ENCODE measurements at regions of chr19 and their contacts with region 1.

Region 1: DNA sequence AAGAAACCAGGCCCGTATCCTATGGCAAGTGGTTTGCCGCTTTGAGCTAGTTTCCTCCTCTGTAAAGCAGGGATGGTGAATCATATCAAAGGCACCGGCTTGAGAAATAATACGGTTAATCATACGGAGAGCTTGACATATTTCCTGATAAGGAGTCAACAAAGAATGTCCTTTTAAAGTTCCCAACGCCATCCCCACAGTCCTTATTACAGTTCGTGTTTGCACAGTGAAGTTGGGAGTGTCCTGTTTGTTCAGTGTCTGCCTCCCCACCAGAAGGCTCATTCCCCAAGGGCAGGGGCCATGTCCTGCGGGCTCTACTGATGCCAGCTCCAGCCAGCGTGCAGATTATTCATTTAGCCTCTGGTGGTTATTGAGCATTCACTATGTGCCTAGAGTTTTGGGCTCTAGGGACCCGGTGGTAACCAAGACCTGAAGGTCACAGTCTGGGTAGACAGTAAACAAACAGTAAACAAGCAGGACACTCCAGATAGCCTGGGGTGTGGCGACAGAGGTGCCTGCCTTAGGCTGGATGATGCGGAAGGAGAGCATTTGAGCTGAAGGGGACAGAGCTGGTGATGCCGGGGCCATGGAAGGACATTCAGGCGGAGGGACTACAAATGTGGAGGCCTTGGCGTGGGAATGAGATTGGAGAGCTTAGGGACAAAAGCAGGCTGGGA is 6.4 kb downstream of the GRAMD1A start:
- DNase-seq: peak; percentile 87 to 99
- H3K4me3 ChIP-seq: peak overlapping the region; percentile 24; the same call in 1 of the 2 replicates
- H3K27ac ChIP-seq: peak overlapping the region; percentile 69
- H3K4me1 ChIP-seq: peaks cover 44% of the 10 kb centered on the region
- H3K27me3 ChIP-seq: no peaks in the 10 kb centered on the region
- CTCF ChIP-seq: no peak

Region 2: GRCh38 chr19:34386645-34387445 is 619.6 kb before region 1 on chr19:
- CTCF ChIA-PET with region 1: no interaction called
- POLR2A ChIA-PET with region 1: interaction called, 27 read pairs
- intact Hi-C with region 1: no loop called
- DNase-seq: no peak
- H3K4me3 ChIP-seq: no peak overlapping the region
- H3K27ac ChIP-seq: no peak overlapping the region
- H3K4me1 ChIP-seq: no peaks in the 10 kb centered on the region
- H3K27me3 ChIP-seq: no peaks in the 10 kb centered on the region
- CTCF ChIP-seq: no peak

Region 3: GRCh38 chr19:34468409-34468808 is 538.1 kb before region 1 on chr19:
- CTCF ChIA-PET with region 1: no interaction called
- POLR2A ChIA-PET with region 1: no interaction called
- intact Hi-C with region 1: no loop called
- DNase-seq: no peak
- H3K4me3 ChIP-seq: no peak overlapping the region
- H3K27ac ChIP-seq: no peak overlapping the region
- H3K4me1 ChIP-seq: no peaks in the 10 kb centered on the region
- H3K27me3 ChIP-seq: no peaks in the 10 kb centered on the region
- CTCF ChIP-seq: no peak

Region 4: GRCh38 chr19:35123573-35123972 is 117.1 kb after region 1 on chr19:
- CTCF ChIA-PET with region 1: no interaction called
- POLR2A ChIA-PET with region 1: no interaction called
- intact Hi-C with region 1: loop called (anchors 2 kb)
- DNase-seq: peak; percentile 74 to 79
- H3K4me3 ChIP-seq: peak overlapping the region; percentile 28; the same call in 1 of the 2 replicates
- H3K27ac ChIP-seq: peak overlapping the region; percentile 90
- H3K4me1 ChIP-seq: peaks cover 76% of the 10 kb centered on the region
- H3K27me3 ChIP-seq: no peaks in the 10 kb centered on the region
- CTCF ChIP-seq: no peak